PC-9 (cell line): ENCODE measurements at regions of chr16 and their contacts with region 1.

Region 1: GRCh38 chr16:12896562-12896961 is 4.8 kb upstream of the SHISA9 start:
- DNase-seq: peak in 1 of 2 experiments; percentile 40
- H3K4me3 ChIP-seq: no peak overlapping the region
- H3K27ac ChIP-seq: no peak overlapping the region
- H3K4me1 ChIP-seq: peaks cover 45% of the 10 kb centered on the region
- H3K27me3 ChIP-seq: no peaks in the 10 kb centered on the region
- CTCF ChIP-seq: peak; percentile 74

Region 2: GRCh38 chr16:13767215-13767614 is 870.7 kb after region 1 on chr16:
- CTCF ChIA-PET with region 1: no interaction called
- POLR2A ChIA-PET with region 1: no interaction called
- intact Hi-C with region 1: loop called (anchors 5 kb)
- DNase-seq: peak in 1 of 2 experiments; percentile 11
- H3K4me3 ChIP-seq: no peak overlapping the region
- H3K27ac ChIP-seq: no peak overlapping the region
- H3K4me1 ChIP-seq: no peaks in the 10 kb centered on the region
- H3K27me3 ChIP-seq: peaks cover 73% of the 10 kb centered on the region
- CTCF ChIP-seq: 0 out of 2 replicates have a peak, but pooled peaks have one; percentile 33